CD4-positive, alpha-beta T cell (primary cell): ENCODE measurements at regions of chr11 and their contacts with region 1.

Region 1: DNA sequence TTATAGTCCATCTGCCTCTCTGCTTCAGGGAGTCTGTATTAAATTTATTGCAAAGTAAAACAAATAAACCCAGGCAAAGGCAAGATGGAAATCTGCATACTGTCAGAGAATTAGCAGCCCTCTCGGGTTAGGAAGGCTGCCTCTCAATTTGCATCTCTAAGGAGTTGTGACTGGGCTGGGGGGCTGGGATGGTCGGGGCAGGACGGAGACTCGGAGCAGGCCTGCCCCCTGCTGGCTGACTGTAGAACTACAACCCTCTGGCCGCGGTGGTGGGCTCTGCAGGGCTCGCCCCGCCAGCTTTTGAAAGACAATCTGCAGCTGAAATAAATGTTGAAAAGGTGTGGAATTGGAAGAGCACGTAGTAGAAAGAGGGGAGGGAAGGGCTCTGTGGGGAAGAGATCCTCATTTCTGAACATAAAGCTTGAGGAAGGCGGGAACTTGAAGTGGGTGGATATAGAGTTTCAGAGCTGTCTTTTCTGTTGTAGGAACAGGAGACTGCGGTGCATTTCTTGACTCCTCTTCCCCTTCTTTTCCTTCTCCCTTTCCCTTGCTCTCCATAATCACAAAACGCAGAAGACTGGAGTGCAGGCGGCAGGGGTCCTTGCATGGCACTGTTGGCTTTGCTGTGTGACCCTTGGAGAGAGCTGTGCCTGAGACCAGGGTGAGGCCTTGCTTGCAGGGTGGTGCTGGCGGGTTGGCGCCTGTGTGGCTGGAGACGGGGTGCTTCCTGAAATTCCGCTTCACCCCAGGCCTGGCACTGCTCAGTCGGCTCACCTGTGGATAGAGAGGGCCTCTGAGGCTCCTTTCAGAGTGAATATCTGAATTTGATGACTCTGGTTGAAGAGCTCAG is 22.6 kb upstream of the PKNOX2 start:
- DNase-seq: peak; percentile 29 to 76 (median 49)
- ATAC-seq: peak; percentile 90
- H3K4me3 ChIP-seq: no peak overlapping the region
- H3K4me3 Mint-ChIP-seq: no peak overlapping the region
- H3K27ac ChIP-seq: no peak overlapping the region
- H3K27ac Mint-ChIP-seq: no peak overlapping the region
- H3K4me1 ChIP-seq: peaks cover 6% of the 10 kb centered on the region
- H3K4me1 Mint-ChIP-seq: peaks cover 6% of the 10 kb centered on the region
- H3K27me3 ChIP-seq: peaks cover 17 to 19% of the 10 kb centered on the region in 2 experiments
- H3K27me3 Mint-ChIP-seq: peaks cover 62% of the 10 kb centered on the region
- CTCF ChIP-seq: peak; percentile 99

Region 2: DNA sequence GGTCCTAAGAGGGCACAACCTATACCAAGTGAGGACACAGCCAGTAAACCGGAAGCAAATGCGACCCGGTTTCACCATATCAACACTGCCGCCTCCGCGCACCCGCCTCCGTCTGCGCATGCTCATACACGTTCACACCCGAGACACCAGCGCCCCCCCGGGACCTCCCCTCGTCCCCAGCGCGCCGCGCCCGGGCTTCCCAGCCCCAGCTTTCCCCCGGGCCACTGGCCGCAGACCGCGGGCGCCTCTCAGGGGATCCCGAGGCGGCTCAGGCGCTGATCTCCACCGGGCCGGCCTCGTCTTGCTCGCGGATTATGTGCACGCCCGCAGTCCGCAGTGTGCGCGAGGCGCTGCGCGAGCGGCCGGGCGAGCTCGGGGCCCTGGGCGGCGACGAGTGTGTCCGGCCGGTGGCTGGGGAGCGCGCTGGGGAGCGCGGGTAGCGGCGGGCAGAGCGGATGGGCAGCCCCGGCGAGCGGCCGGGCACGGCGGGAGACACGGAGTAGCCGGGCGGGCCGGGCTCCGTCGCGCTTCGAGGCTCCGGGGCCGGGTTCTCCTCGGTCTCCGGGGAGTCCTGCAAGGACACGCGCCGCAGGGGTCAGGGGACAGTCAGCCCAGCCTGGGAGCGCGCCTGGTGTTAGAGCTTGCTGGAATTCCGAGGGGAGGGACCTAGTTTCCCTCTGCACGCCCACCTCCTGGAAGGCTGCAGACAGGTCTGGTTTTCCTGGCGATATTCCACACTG is 220.9 kb before region 1 on chr11:
- CTCF ChIA-PET with region 1: no interaction called
- POLR2A ChIA-PET with region 1: no interaction called
- intact Hi-C with region 1: loop called in 1 of 2 experiments (anchors 5 kb)
- DNase-seq: peak; percentile 59 to 90 (median 78)
- ATAC-seq: peak; percentile 87
- H3K4me3 ChIP-seq: peak overlapping the region; percentile 43
- H3K4me3 Mint-ChIP-seq: peak overlapping the region; percentile 85
- H3K27ac ChIP-seq: no peak overlapping the region
- H3K27ac Mint-ChIP-seq: peak overlapping the region; percentile 52
- H3K4me1 ChIP-seq: peaks cover 27% of the 10 kb centered on the region
- H3K4me1 Mint-ChIP-seq: peaks cover 42% of the 10 kb centered on the region
- H3K27me3 ChIP-seq: no peaks in the 10 kb centered on the region
- H3K27me3 Mint-ChIP-seq: no peaks in the 10 kb centered on the region
- CTCF ChIP-seq: no peak

Region 3: GRCh38 chr11:124961972-124962609 is 179.8 kb before region 1 on chr11:
- CTCF ChIA-PET with region 1: interaction called, 3 read pairs
- POLR2A ChIA-PET with region 1: no interaction called
- intact Hi-C with region 1: loop called (anchors 1 kb)
- DNase-seq: peak in 4 of 14 experiments; percentile 16 to 82 (median 80)
- ATAC-seq: peak; percentile 98
- H3K4me3 ChIP-seq: no peak overlapping the region
- H3K4me3 Mint-ChIP-seq: no peak overlapping the region
- H3K27ac ChIP-seq: no peak overlapping the region
- H3K27ac Mint-ChIP-seq: no peak overlapping the region
- H3K4me1 ChIP-seq: no peaks in the 10 kb centered on the region
- H3K4me1 Mint-ChIP-seq: no peaks in the 10 kb centered on the region
- H3K27me3 ChIP-seq: no peaks in the 10 kb centered on the region
- H3K27me3 Mint-ChIP-seq: no peaks in the 10 kb centered on the region
- CTCF ChIP-seq: peak; percentile 82

Region 4: GRCh38 chr11:125025968-125026367 is 115.9 kb before region 1 on chr11:
- CTCF ChIA-PET with region 1: no interaction called
- POLR2A ChIA-PET with region 1: no interaction called
- intact Hi-C with region 1: no loop called
- DNase-seq: no peak
- ATAC-seq: no peak
- H3K4me3 ChIP-seq: no peak overlapping the region
- H3K4me3 Mint-ChIP-seq: no peak overlapping the region
- H3K27ac ChIP-seq: no peak overlapping the region
- H3K27ac Mint-ChIP-seq: no peak overlapping the region
- H3K4me1 ChIP-seq: no peaks in the 10 kb centered on the region
- H3K4me1 Mint-ChIP-seq: no peaks in the 10 kb centered on the region
- H3K27me3 ChIP-seq: no peaks in the 10 kb centered on the region
- H3K27me3 Mint-ChIP-seq: no peaks in the 10 kb centered on the region
- CTCF ChIP-seq: no peak

Region 5: DNA sequence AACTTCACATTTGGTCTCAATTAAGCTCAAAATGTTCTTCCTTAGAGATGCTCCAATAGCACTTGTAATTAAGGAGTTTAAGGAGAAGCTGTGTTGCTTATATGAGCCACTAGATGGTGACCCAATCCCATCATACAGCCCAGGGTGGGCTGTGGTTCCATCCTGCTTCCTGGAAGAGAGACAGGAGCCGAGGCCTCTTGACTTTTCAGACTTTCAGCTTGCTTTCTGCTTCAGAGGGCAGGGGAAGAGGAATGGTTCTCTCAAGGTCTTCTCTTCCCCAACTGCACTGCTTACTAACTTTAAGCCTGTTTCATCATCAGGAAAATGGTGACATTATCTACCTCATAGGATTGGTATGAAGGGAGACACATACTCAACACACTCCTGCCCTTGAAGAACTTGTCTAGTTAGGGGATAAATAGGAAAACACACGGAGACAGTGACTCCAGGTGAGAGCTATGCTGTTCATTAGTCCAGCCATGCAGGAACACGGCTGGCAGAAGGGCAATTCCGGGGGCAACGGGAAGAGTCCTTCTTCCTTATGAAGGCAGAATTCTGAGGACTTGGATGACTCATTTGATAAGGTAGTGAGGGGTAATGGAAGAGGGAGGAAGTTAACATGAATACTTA is 50.5 kb before region 1 on chr11:
- CTCF ChIA-PET with region 1: interaction called, 9 read pairs
- POLR2A ChIA-PET with region 1: interaction called, 4 read pairs
- intact Hi-C with region 1: loop called in 1 of 2 experiments (anchors 1 kb)
- DNase-seq: peak in 4 of 14 experiments; percentile 17 to 34 (median 28)
- ATAC-seq: no peak
- H3K4me3 ChIP-seq: no peak overlapping the region
- H3K4me3 Mint-ChIP-seq: no peak overlapping the region
- H3K27ac ChIP-seq: no peak overlapping the region
- H3K27ac Mint-ChIP-seq: no peak overlapping the region
- H3K4me1 ChIP-seq: no peaks in the 10 kb centered on the region
- H3K4me1 Mint-ChIP-seq: no peaks in the 10 kb centered on the region
- H3K27me3 ChIP-seq: no peaks in the 10 kb centered on the region
- H3K27me3 Mint-ChIP-seq: no peaks in the 10 kb centered on the region
- CTCF ChIP-seq: peak; percentile 22

Region 6: GRCh38 chr11:125123947-125124617 is 17.8 kb before region 1 on chr11:
- CTCF ChIA-PET with region 1: interaction called, 12 read pairs
- POLR2A ChIA-PET with region 1: no interaction called
- intact Hi-C with region 1: no loop called
- DNase-seq: peak in 8 of 14 experiments; percentile 22 to 63 (median 36)
- ATAC-seq: peak; percentile 51
- H3K4me3 ChIP-seq: no peak overlapping the region
- H3K4me3 Mint-ChIP-seq: no peak overlapping the region
- H3K27ac ChIP-seq: no peak overlapping the region
- H3K27ac Mint-ChIP-seq: no peak overlapping the region
- H3K4me1 ChIP-seq: no peaks in the 10 kb centered on the region
- H3K4me1 Mint-ChIP-seq: no peaks in the 10 kb centered on the region
- H3K27me3 ChIP-seq: peaks cover 8 to 10% of the 10 kb centered on the region in 2 experiments
- H3K27me3 Mint-ChIP-seq: peaks cover 58% of the 10 kb centered on the region
- CTCF ChIP-seq: peak; percentile 61

Region 7: DNA sequence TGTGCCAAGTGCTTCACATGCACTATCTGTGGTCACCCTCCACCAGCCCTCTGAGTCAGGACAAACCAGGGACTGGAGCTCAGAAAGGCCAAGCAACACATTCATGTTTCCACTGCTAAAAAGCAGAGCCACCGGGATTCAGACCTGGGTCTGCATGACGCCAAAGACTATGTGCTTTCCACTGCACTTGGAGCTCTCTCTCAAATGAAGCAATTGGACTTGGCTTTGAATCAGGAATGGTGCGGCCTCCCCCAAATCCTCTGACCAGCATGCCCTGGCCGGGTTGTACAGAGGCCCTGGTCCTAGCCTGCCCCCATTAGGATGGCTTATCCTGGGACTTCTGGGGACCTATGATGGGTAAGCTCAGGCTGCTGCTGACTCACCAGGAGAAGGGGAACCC is 103.4 kb after region 1 on chr11:
- CTCF ChIA-PET with region 1: no interaction called
- POLR2A ChIA-PET with region 1: no interaction called
- intact Hi-C with region 1: no loop called
- DNase-seq: no peak
- ATAC-seq: no peak
- H3K4me3 ChIP-seq: no peak overlapping the region
- H3K4me3 Mint-ChIP-seq: no peak overlapping the region
- H3K27ac ChIP-seq: no peak overlapping the region
- H3K27ac Mint-ChIP-seq: no peak overlapping the region
- H3K4me1 ChIP-seq: no peaks in the 10 kb centered on the region
- H3K4me1 Mint-ChIP-seq: no peaks in the 10 kb centered on the region
- H3K27me3 ChIP-seq: peaks cover 0 to 5% of the 10 kb centered on the region in 2 experiments
- H3K27me3 Mint-ChIP-seq: peaks cover 19% of the 10 kb centered on the region
- CTCF ChIP-seq: no peak

Region 8: DNA sequence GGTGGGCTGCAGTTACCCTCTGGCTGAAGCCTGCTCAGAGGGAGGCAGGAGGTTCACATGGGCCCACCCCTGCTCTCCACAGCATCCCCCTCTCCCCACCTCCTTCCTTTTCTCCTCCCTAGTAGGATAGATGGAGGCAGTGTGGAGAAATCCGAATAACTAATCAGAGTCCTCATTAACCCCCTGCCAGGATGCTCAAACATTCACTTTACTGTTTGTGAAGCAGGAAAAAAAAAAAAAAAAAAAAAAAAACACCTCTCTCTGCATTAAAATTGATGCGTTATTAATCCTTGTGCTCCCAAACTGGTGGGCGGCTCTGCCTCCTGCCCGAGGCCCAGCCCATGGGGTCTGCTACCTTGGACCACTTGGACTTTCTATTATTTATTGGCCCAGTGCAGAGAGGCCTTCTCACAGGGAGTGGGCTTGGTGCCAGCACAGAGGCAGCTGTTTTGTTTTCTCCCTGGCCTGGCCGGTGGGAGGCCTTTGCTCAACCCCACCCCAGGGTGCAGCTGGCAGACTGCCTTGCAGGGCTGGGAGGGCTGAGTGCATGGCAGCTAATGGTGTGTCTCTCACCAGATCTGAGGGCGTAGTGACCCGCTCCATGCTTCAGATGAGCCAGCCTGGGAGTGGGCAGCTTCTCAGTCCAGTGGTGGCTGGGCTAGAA is 173.3 kb after region 1 on chr11:
- CTCF ChIA-PET with region 1: no interaction called
- POLR2A ChIA-PET with region 1: no interaction called
- intact Hi-C with region 1: no loop called
- DNase-seq: no peak
- ATAC-seq: no peak
- H3K4me3 ChIP-seq: no peak overlapping the region
- H3K4me3 Mint-ChIP-seq: no peak overlapping the region
- H3K27ac ChIP-seq: no peak overlapping the region
- H3K27ac Mint-ChIP-seq: no peak overlapping the region
- H3K4me1 ChIP-seq: no peaks in the 10 kb centered on the region
- H3K4me1 Mint-ChIP-seq: no peaks in the 10 kb centered on the region
- H3K27me3 ChIP-seq: peaks cover 0 to 8% of the 10 kb centered on the region in 2 experiments
- H3K27me3 Mint-ChIP-seq: peaks cover 37% of the 10 kb centered on the region
- CTCF ChIP-seq: no peak